ENCODE measurements at regions of chr4 and their contacts with region 1.

Region 1: GRCh38 chr4:17324386-17324830 is 187.5 kb downstream of the QDPR start:
- DNase-seq: peak in 1 of 2 experiments; percentile 16
- H3K4me3 ChIP-seq: no peak overlapping the region
- H3K4me3 Mint-ChIP-seq: no peak overlapping the region
- H3K27ac Mint-ChIP-seq: no peak overlapping the region
- H3K4me1 ChIP-seq: no peaks in the 10 kb centered on the region
- H3K4me1 Mint-ChIP-seq: no peaks in the 10 kb centered on the region
- H3K27me3 ChIP-seq: no peaks in the 10 kb centered on the region
- H3K27me3 Mint-ChIP-seq: peaks cover 10% of the 10 kb centered on the region
- CTCF ChIP-seq: peak; percentile 18 to 59

Region 2: DNA sequence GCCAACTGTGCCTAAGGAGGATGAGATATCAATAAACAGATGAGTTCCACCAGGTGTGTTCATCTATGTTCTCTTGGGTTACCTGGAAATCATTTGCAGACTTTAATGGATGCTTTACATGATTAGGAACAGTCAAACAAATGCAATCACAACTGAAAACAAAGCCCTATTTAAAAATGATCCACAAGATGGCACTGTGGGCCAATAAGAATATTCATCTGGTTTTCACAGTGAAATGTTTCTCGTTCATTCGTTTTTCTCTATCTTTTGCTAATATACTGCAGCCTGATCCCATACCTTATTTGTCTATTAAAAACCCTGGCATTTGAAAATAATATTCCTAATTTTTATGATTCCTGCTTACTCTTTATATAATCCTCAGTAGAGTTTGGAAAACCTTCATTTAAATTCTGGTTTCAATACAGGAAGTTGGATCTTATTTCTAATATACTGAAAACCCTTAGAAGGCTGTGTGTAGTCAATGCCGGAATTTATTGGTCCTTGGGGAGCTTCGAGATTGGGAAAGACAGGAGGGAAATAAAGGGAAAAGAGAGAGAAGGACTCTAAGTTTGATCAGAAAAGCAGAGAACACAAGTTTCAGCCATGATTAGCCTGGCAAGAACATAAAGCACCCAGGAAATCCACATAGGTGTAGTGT is 1034.4 kb before region 1 on chr4:
- CTCF ChIA-PET with region 1: no interaction called
- POLR2A ChIA-PET with region 1: no interaction called
- intact Hi-C with region 1: loop called (anchors 2 kb)
- DNase-seq: peak in 1 of 2 experiments; percentile 29
- H3K4me3 ChIP-seq: no peak overlapping the region
- H3K4me3 Mint-ChIP-seq: no peak overlapping the region
- H3K27ac Mint-ChIP-seq: no peak overlapping the region
- H3K4me1 ChIP-seq: no peaks in the 10 kb centered on the region
- H3K4me1 Mint-ChIP-seq: no peaks in the 10 kb centered on the region
- H3K27me3 ChIP-seq: no peaks in the 10 kb centered on the region
- H3K27me3 Mint-ChIP-seq: peaks cover 9% of the 10 kb centered on the region
- CTCF ChIP-seq: peak; percentile 40 to 45

Region 3: GRCh38 chr4:16642895-16643294 is 681.5 kb before region 1 on chr4:
- CTCF ChIA-PET with region 1: no interaction called
- POLR2A ChIA-PET with region 1: no interaction called
- intact Hi-C with region 1: loop called (anchors 1 kb)
- DNase-seq: peak in 1 of 2 experiments; percentile 6
- H3K4me3 ChIP-seq: no peak overlapping the region
- H3K4me3 Mint-ChIP-seq: no peak overlapping the region
- H3K27ac Mint-ChIP-seq: no peak overlapping the region
- H3K4me1 ChIP-seq: no peaks in the 10 kb centered on the region
- H3K4me1 Mint-ChIP-seq: no peaks in the 10 kb centered on the region
- H3K27me3 ChIP-seq: no peaks in the 10 kb centered on the region; the same call in 1 of the 2 replicates
- H3K27me3 Mint-ChIP-seq: peaks cover 7% of the 10 kb centered on the region
- CTCF ChIP-seq: peak; percentile 10 to 20

Region 4: DNA sequence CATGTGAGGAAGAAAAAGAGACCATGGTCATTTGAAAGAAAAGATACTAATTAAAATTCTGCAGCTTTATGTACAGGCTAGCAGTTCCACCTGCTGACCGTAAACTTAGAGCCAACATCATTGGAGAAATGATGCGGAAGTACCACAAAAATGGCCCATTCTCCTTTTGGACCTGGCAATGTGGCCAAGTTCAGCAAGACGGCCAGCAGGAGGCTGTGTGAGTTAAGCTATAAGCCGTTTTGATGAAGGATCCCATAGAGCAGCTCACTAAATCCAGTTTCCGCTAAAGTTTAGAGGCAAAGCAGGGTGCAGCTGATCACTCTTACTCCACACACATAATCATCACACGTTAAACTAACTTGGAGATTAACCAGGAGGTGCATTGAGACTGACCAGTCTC is 559.8 kb before region 1 on chr4:
- CTCF ChIA-PET with region 1: no interaction called
- POLR2A ChIA-PET with region 1: no interaction called
- intact Hi-C with region 1: loop called (anchors 10 kb)
- DNase-seq: peak in 1 of 2 experiments; percentile 2
- H3K4me3 ChIP-seq: no peak overlapping the region
- H3K4me3 Mint-ChIP-seq: no peak overlapping the region
- H3K27ac Mint-ChIP-seq: no peak overlapping the region
- H3K4me1 ChIP-seq: no peaks in the 10 kb centered on the region
- H3K4me1 Mint-ChIP-seq: no peaks in the 10 kb centered on the region
- H3K27me3 ChIP-seq: no peaks in the 10 kb centered on the region
- H3K27me3 Mint-ChIP-seq: peaks cover 2% of the 10 kb centered on the region
- CTCF ChIP-seq: peak in 1 of 2 experiments; percentile 28

Region 5: DNA sequence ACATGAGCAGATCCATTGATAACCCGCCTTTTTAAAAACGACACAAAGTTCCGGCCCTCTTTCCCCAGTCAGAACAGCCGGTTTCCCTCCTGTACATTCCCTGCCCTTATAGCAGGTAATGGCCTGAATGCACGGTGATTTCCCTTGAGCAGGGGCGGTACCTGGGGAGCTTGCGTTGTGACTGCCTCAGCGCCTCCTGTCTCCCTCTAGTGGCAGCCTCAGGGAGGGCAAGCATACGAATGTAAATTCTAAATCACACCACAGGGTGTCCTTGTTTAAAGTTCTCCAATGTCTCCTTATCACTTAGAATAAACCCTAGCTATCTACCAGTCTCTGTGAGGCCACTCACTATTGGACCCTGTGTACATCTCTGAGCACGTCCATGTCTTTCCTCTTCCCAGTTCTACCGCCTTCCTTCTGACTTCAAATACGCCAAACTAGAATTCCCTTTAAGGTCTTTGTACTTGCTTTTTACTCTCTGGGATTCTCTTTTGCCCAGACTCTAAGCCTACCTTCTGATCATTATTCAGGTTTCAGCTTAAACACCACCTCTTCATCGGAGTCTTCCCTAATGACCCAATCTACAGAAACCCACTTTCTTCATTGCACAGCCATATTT is 407.6 kb before region 1 on chr4:
- CTCF ChIA-PET with region 1: no interaction called
- POLR2A ChIA-PET with region 1: no interaction called
- intact Hi-C with region 1: loop called (anchors 2 kb)
- DNase-seq: peak; percentile 62 to 72
- H3K4me3 ChIP-seq: no peak overlapping the region
- H3K4me3 Mint-ChIP-seq: no peak overlapping the region
- H3K27ac Mint-ChIP-seq: no peak overlapping the region
- H3K4me1 ChIP-seq: no peaks in the 10 kb centered on the region
- H3K4me1 Mint-ChIP-seq: no peaks in the 10 kb centered on the region
- H3K27me3 ChIP-seq: no peaks in the 10 kb centered on the region
- H3K27me3 Mint-ChIP-seq: no peaks in the 10 kb centered on the region
- CTCF ChIP-seq: peak; percentile 78 to 79

Region 6: GRCh38 chr4:17173300-17173699 is 151.1 kb before region 1 on chr4:
- CTCF ChIA-PET with region 1: interaction called, 4 read pairs
- POLR2A ChIA-PET with region 1: no interaction called
- intact Hi-C with region 1: loop called (anchors 10 kb)
- DNase-seq: peak in 1 of 2 experiments; percentile 6
- H3K4me3 ChIP-seq: no peak overlapping the region
- H3K4me3 Mint-ChIP-seq: no peak overlapping the region
- H3K27ac Mint-ChIP-seq: no peak overlapping the region
- H3K4me1 ChIP-seq: no peaks in the 10 kb centered on the region
- H3K4me1 Mint-ChIP-seq: no peaks in the 10 kb centered on the region
- H3K27me3 ChIP-seq: no peaks in the 10 kb centered on the region; the same call in 1 of the 2 replicates
- H3K27me3 Mint-ChIP-seq: peaks cover 2% of the 10 kb centered on the region
- CTCF ChIP-seq: no peak